ENCODE measurements at regions of chr1 and their contacts with region 1.

Region 1: DNA sequence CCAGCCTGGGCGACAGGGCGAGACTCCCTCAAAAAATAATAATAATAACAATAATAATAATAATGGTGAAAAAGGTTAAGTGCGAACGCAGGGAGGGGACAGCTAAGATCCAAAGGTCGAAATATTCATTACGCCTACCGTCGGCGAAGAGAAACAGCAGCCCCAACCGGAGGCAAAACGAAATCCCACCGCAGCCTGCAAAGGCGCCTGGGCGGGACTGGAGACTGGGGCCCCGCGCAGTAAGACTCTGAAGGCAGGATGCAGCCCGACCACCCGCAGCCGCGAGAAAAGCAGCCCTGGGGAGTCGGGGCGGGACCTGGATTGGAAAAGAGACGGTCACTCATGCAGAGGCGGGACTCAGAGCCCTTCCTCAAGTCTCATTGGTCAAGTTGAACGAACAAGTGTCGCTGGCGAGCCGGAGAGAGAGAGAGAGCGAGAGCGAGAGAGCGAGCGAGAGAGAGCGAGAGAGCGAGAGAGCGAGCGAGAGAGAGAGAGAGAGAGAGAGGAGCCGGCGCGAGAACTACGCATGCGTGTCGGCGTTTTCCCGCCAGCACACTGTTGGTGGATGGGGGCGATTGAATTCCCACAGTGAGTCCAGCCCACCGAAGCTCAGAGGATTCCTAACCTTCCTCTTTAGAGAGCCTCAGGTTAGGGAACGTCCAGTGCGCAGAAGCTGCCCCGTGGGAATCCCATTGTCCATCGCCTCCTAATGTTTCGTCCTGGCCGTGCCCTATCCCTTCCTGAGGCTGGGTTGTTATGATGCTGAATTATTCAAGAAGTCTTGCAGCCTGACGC is 10.7 kb downstream of the ENTREP3 start:
- DNase-seq: peak; percentile 99
- H3K4me3 Mint-ChIP-seq: peak overlapping the region; percentile 81
- H3K27ac Mint-ChIP-seq: peak overlapping the region; percentile 96
- H3K4me1 Mint-ChIP-seq: peaks cover 49% of the 10 kb centered on the region
- H3K27me3 Mint-ChIP-seq: peaks cover 3% of the 10 kb centered on the region

Region 2: GRCh38 chr1:155218854-155219591 is 25.5 kb before region 1 on chr1:
- intact Hi-C with region 1: loop called (anchors 2 kb)
- DNase-seq: peak; percentile 84
- H3K4me3 Mint-ChIP-seq: peak overlapping the region; percentile 51
- H3K27ac Mint-ChIP-seq: peak overlapping the region; percentile 85
- H3K4me1 Mint-ChIP-seq: peaks cover 24% of the 10 kb centered on the region
- H3K27me3 Mint-ChIP-seq: no peaks in the 10 kb centered on the region

Region 3: DNA sequence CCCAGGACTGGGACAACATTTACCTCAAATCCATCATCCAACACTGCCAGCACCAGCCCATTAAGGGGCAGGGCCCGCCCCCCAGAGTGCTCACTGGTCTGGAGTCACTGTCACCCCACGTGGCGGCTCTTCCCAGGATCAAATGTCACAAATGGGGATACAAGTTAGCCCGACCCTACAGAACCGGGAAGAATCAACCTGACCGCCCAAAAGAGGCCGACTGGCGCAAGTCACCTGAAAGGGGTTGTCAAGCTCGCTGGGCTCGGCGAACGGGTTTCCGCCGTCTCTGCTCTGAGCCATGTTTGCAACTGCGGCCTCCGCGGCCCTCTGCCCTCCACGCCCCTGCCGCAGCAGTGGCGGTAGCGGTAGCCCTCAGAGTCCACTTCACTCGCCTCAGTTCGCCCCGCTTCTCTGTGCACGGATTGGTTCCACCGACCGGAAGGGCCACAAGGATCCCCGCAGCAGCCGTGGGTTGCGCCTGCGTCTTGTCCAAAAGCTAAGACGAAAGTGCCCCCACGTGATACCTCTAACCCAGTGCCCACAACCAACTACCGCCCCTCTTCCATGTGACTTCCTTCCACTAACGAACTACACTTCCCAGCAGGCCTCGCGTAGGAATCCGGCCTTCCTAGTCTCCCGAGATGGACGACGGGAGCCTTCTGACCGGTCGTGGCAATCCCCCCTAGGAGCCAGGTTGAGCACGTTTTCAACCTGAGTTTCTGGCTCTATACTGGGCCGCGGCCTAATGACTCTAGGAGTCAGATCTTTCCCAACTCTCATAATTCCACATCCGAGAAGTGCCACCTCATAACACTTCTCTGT is 17.5 kb after region 1 on chr1 and contains the start of gene SCAMP3:
- intact Hi-C with region 1: loop called (anchors 1 kb)
- DNase-seq: peak; percentile 96
- H3K4me3 Mint-ChIP-seq: peak within 1 kb of the TSS; percentile 96
- H3K27ac Mint-ChIP-seq: peak within 1 kb of the TSS; percentile 91
- H3K4me1 Mint-ChIP-seq: peaks cover 30% of the 10 kb centered on the region
- H3K27me3 Mint-ChIP-seq: no peaks in the 10 kb centered on the region
- total RNA-seq, gene SCAMP3: 152 and 158 TPM in 2 replicates

Region 4: GRCh38 chr1:155285631-155286044 is 41.1 kb after region 1 on chr1:
- intact Hi-C with region 1: no loop called
- DNase-seq: no peak
- H3K4me3 Mint-ChIP-seq: no peak overlapping the region
- H3K27ac Mint-ChIP-seq: no peak overlapping the region
- H3K4me1 Mint-ChIP-seq: no peaks in the 10 kb centered on the region
- H3K27me3 Mint-ChIP-seq: peaks cover 3% of the 10 kb centered on the region

Measured in activated CD4-positive, alpha-beta T cell treated with anti-CD3 and anti-CD28 coated beads, Interleukin-2, amount 10 ng/mL, durations not matched to agents 24 days and 14 days (primary cell).